Calu3 (cell line): ENCODE measurements at regions of chr11 and their contacts with region 1.

Region 1: GRCh38 chr11:13016415-13016814 is 7.3 kb downstream of the RASSF10 start:
- DNase-seq: peak; percentile 38
- H3K4me3 Mint-ChIP-seq: no peak overlapping the region
- H3K27ac Mint-ChIP-seq: no peak overlapping the region
- H3K4me1 Mint-ChIP-seq: peaks cover 50% of the 10 kb centered on the region
- H3K27me3 Mint-ChIP-seq: no peaks in the 10 kb centered on the region
- CTCF ChIP-seq: no peak

Region 2: GRCh38 chr11:13152736-13153533 is 136.5 kb after region 1 on chr11:
- CTCF ChIA-PET with region 1: no interaction called
- intact Hi-C with region 1: loop called (anchors 1 kb)
- DNase-seq: no peak
- H3K4me3 Mint-ChIP-seq: no peak overlapping the region
- H3K27ac Mint-ChIP-seq: no peak overlapping the region
- H3K4me1 Mint-ChIP-seq: peaks cover 62% of the 10 kb centered on the region
- H3K27me3 Mint-ChIP-seq: no peaks in the 10 kb centered on the region
- CTCF ChIP-seq: no peak

Region 3: DNA sequence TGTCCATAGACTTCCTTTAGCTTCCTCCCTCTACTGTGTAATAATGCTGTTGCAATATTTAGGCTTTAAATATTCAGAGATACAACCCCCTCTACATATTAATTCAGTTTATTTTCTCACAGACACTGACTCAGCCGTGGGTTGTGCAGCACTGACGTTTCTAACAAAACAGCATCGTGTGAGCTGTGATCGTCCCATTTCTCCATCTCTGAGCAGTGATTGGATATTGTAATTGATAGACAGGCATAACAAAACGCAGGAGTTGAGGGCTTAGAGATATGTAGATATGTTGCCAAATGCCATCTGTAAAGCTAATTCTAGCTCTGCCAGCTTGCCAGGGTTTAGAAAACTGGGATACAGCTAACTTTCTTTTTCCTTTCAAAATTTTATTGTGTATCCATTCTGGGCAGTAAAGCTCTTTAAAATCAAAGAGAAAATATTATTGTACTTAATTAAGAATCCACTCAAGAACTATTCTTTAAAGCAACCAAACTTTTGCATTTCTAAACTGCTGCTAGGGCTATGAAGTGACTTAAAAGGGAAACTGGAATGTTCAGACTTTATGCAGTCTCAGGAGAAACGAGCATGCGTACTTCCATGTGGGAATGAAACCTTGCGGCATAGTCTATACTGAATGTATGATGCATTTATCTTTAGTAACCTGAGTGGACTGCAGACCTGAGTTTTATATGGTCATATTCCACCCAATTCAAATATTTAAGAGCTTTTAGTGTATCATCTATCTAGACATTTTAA is 423.9 kb after region 1 on chr11:
- CTCF ChIA-PET with region 1: no interaction called
- intact Hi-C with region 1: no loop called
- DNase-seq: peak; percentile 29
- H3K4me3 Mint-ChIP-seq: peak overlapping the region; percentile 42
- H3K27ac Mint-ChIP-seq: peak overlapping the region; percentile 4
- H3K4me1 Mint-ChIP-seq: peaks cover 8% of the 10 kb centered on the region
- H3K27me3 Mint-ChIP-seq: no peaks in the 10 kb centered on the region
- CTCF ChIP-seq: no peak